Activated CD4-positive, alpha-beta T cell treated with anti-CD3 and anti-CD28 coated beads for 36 hours (primary cell): ENCODE measurements at regions of chr1 and their contacts with region 1.

Region 1: GRCh38 chr1:84959294-84959693 is 37.6 kb downstream of the MCOLN2 start:
- DNase-seq: peak; percentile 77
- ATAC-seq: peak; percentile 97
- H3K4me3 Mint-ChIP-seq: peak overlapping the region; percentile 7
- H3K27ac Mint-ChIP-seq: peak overlapping the region; percentile 87
- H3K4me1 Mint-ChIP-seq: peaks cover 33% of the 10 kb centered on the region
- H3K27me3 Mint-ChIP-seq: peaks cover 2% of the 10 kb centered on the region

Region 2: GRCh38 chr1:84632673-84633434 is 326.4 kb before region 1 on chr1:
- CTCF ChIA-PET with region 1: no interaction called
- POLR2A ChIA-PET with region 1: no interaction called
- intact Hi-C with region 1: no loop called
- DNase-seq: no peak
- ATAC-seq: peak; percentile 74
- H3K4me3 Mint-ChIP-seq: no peak overlapping the region
- H3K27ac Mint-ChIP-seq: no peak overlapping the region
- H3K4me1 Mint-ChIP-seq: peaks cover 6% of the 10 kb centered on the region
- H3K27me3 Mint-ChIP-seq: no peaks in the 10 kb centered on the region

Region 3: DNA sequence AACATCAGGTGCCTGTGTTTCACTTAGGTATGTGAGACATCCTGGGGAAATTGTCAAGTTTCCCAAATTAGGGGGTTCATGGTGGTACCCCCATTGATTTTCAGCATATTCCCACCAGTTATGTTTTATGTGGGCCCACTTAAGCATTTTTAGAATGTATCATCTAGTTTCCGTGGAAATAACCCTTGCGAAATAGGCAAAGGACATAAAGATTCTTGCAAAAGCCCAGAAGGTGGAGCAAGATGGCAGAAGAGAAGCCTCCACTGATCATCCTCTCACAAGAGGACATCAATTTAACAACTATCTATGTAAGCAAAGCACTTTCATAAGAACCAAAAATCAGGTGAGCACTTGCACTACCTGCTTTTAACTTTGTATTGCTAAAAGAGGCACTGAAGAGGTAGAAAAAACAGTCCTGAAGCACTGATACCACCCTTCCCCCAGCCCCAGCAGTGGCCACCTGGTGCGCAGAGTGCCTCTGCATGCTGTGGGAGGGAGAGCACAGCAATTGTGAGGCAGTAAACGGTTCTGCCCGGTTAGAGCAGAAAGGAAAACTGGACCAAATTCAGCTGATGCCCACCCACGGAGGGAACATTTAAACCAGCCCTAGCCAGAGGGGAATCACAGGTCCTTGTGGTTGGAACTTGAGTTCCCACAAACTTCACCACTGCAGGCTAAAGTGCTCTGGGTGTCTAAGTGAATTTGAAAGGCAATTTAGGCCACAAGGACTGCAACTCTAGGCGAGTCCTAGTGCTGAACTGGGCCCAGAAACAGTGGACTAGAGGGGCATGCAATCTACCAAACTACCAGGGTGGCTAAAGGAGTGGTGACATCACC is 14.4 kb after region 1 on chr1:
- CTCF ChIA-PET with region 1: interaction called, 7 read pairs
- POLR2A ChIA-PET with region 1: interaction called, 8 read pairs
- intact Hi-C with region 1: loop called (anchors 1 kb)
- DNase-seq: peak; percentile 41
- ATAC-seq: no peak
- H3K4me3 Mint-ChIP-seq: no peak overlapping the region
- H3K27ac Mint-ChIP-seq: peak overlapping the region; percentile 35
- H3K4me1 Mint-ChIP-seq: peaks cover 60% of the 10 kb centered on the region
- H3K27me3 Mint-ChIP-seq: no peaks in the 10 kb centered on the region

Region 4: GRCh38 chr1:85027242-85027983 is 68.1 kb after region 1 on chr1:
- CTCF ChIA-PET with region 1: interaction called, 4 read pairs
- POLR2A ChIA-PET with region 1: no interaction called
- intact Hi-C with region 1: loop called in 1 of 2 experiments (anchors 1 kb)
- DNase-seq: peak; percentile 21
- ATAC-seq: peak; percentile 84
- H3K4me3 Mint-ChIP-seq: no peak overlapping the region
- H3K27ac Mint-ChIP-seq: peak overlapping the region; percentile 70
- H3K4me1 Mint-ChIP-seq: peaks cover 10% of the 10 kb centered on the region
- H3K27me3 Mint-ChIP-seq: no peaks in the 10 kb centered on the region

Region 5: GRCh38 chr1:85297855-85298629 is 338.7 kb after region 1 on chr1:
- CTCF ChIA-PET with region 1: no interaction called
- POLR2A ChIA-PET with region 1: no interaction called
- intact Hi-C with region 1: loop called in 1 of 2 experiments (anchors 1 kb)
- DNase-seq: peak; percentile 88
- ATAC-seq: peak; percentile 93
- H3K4me3 Mint-ChIP-seq: peak overlapping the region; percentile 56
- H3K27ac Mint-ChIP-seq: peak overlapping the region; percentile 72
- H3K4me1 Mint-ChIP-seq: peaks cover 26% of the 10 kb centered on the region
- H3K27me3 Mint-ChIP-seq: peaks cover 30% of the 10 kb centered on the region

Region 6: GRCh38 chr1:85576642-85577418 is 617.5 kb after region 1 on chr1:
- CTCF ChIA-PET with region 1: no interaction called
- POLR2A ChIA-PET with region 1: no interaction called
- intact Hi-C with region 1: loop called in 1 of 2 experiments (anchors 5 kb)
- DNase-seq: peak; percentile 80
- ATAC-seq: peak; percentile 50
- H3K4me3 Mint-ChIP-seq: peak overlapping the region; percentile 62
- H3K27ac Mint-ChIP-seq: no peak overlapping the region
- H3K4me1 Mint-ChIP-seq: peaks cover 31% of the 10 kb centered on the region
- H3K27me3 Mint-ChIP-seq: peaks cover 65% of the 10 kb centered on the region